ENCODE measurements at regions of chr3 and their contacts with region 1.

Region 1: GRCh38 chr3:171390051-171390941 is 69.9 kb downstream of the TNIK start:
- DNase-seq: no peak

Region 2: GRCh38 chr3:171356251-171356650 is 34.0 kb before region 1 on chr3:
- intact Hi-C with region 1: loop called in 1 of 2 experiments (anchors 1 kb)
- DNase-seq: no peak